ENCODE measurements at regions of chr7 and their contacts with region 1.

Region 1: GRCh38 chr7:106542550-106543220 is 118.3 kb downstream of the CCDC71L start:
- DNase-seq: peak; percentile 76
- H3K4me3 Mint-ChIP-seq: no peak overlapping the region
- H3K27ac Mint-ChIP-seq: no peak overlapping the region
- H3K4me1 Mint-ChIP-seq: peaks cover 8% of the 10 kb centered on the region
- H3K27me3 Mint-ChIP-seq: no peaks in the 10 kb centered on the region

Region 2: DNA sequence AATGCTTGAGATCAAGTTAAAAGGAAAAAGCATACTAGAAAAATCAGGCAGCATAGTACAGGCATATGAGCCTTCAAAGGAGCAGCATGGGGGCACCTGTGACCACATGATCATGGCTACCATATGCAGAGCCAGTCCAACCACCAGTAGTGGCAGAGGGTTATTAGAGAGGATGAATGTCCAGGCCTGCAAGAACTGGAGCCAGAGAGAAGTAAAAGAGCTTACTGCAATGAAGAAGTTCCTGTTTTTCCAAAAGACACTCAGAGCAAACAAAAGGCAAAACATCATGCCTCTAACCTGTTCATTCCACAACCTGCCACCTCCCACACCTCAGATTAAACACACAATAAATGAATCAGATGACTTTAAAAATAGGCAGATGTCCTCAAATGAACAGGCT is 158.3 kb before region 1 on chr7:
- CTCF ChIA-PET with region 1: interaction called, 10 read pairs
- intact Hi-C with region 1: no loop called
- DNase-seq: no peak
- H3K4me3 Mint-ChIP-seq: no peak overlapping the region
- H3K27ac Mint-ChIP-seq: no peak overlapping the region
- H3K4me1 Mint-ChIP-seq: no peaks in the 10 kb centered on the region
- H3K27me3 Mint-ChIP-seq: peaks cover 13% of the 10 kb centered on the region

Region 3: DNA sequence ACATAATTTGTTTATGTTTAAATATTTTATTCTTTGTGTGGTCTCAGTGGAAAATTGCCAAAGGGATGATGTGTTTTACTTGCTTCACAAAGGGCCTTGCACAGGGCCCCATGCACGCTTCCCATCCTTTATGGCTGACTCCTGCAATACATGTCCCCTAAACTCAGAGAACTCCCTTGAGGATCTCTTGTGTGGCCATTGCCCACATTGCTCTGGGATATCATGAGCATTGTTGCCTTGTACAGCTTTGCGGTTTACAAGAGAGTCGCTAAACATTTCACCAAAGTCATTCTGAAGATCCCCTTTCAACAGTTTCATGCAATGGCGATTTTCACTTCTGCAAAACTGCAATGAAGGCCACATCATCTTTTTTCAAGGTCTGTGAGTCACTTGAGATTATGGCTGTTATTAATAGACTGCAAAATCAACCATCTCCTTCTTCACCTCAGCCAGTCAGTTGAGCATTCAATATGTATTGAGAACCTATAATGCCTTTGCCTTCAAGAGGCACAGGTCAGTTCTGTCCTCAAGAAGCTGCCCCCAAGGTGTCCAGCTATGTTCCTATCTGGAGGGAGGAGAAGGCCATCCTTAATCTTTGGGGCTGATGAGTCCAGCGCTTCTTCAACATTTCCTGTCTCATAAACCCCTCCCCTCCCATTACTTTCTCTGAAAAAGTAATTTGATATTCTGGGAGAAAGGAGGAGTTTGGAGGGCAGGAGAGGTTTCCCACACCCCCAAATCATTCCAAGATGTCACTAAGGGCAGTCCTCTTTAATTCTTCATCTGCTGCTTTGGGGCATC is 10.2 kb after region 1 on chr7:
- CTCF ChIA-PET with region 1: interaction called, 12 read pairs
- intact Hi-C with region 1: no loop called
- DNase-seq: no peak
- H3K4me3 Mint-ChIP-seq: no peak overlapping the region
- H3K27ac Mint-ChIP-seq: no peak overlapping the region
- H3K4me1 Mint-ChIP-seq: no peaks in the 10 kb centered on the region
- H3K27me3 Mint-ChIP-seq: peaks cover 2% of the 10 kb centered on the region

Region 4: DNA sequence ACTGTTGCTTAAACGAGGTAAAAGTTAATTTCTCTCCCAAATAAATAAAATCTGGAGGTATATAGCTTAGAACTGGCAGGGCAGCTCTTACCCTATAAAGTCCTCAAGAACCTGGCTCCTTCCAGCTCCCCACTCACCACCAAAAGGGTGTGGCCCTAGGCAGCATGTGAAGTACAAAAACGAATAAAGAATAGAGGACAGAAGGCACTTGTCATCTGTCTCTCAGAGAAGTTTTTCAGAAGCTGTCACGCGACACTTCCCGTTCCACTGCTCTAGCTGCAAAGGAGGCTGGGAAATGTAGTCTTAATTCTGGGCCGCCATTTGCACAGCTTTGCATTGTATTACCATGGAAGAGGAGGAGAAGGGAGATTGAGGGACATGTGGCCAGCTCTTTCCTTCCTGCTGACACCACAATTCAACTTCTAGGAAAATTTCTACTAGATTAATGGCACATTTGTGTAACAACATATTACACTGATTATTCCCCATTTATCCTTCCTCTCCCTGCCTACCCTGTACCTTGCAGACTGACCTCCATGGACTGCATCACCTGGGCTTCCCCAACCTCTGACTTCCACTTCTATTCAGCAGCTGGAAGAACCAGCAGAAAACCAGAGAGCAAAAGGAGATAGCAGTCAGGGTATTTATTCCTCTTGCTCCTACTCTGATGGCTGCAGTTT is 56.1 kb after region 1 on chr7:
- CTCF ChIA-PET with region 1: no interaction called
- intact Hi-C with region 1: loop called (anchors 2 kb)
- DNase-seq: peak; percentile 85
- H3K4me3 Mint-ChIP-seq: peak overlapping the region; percentile 44
- H3K27ac Mint-ChIP-seq: no peak overlapping the region
- H3K4me1 Mint-ChIP-seq: peaks cover 4% of the 10 kb centered on the region
- H3K27me3 Mint-ChIP-seq: no peaks in the 10 kb centered on the region

Measured in activated naive CD4-positive, alpha-beta T cell treated with anti-CD3 and anti-CD28 coated beads for 36 hours (primary cell).